ENCODE measurements at regions of chr14 and their contacts with region 1.

Region 1: DNA sequence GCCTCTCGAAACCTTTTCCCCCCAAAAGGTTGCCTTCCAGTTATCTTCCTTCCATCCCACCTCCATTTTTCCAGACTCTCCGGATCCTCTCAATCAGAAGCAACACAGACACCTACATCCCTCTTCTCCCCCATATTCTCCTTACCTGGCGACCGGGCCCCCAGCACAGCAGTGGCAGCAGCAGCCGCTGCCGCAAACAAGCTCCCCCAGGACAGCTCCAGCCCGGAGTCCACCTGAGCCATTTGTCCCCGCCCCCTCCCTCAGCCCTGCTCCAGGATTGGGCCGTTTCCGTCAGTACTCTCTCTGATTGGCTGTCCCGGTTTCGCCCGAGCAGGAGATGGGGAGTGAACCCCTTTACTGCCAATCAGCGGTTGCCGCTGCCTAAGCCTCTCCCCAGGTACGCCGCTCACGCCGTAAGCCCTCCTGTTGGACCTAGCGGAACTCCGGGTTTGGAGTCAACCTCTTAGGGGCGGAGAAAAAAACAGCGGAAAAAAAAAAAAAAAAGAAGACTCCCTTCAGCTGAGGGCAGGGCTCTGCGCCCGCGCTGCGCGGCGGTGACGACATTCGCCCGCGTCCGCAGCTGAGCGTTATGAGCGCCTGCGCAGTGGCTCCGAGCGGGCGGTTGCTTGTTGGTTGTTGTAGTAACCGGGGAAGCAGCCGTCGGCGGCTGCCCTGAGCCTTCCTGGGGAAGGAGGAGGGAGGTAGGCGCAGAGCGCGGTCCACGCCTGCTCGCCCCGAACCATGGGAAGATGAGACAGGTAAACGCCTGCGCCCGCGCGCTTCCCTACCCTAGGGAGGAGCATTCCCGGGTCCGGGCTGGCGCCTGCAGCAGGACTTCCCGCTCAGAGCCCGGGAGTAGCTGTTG is at the starts of genes ERG28 and TTLL5:
- DNase-seq: peak; percentile 94
- ATAC-seq: peak; percentile 92
- H3K4me3 Mint-ChIP-seq: peak within 1 kb of the TSS; percentile 99
- H3K27ac Mint-ChIP-seq: peak within 1 kb of the TSS; percentile 97
- H3K4me1 Mint-ChIP-seq: peaks cover 25% of the 10 kb centered on the region
- H3K27me3 Mint-ChIP-seq: no peaks in the 10 kb centered on the region
- CTCF ChIP-seq: no peak
- total RNA-seq, gene ERG28: 28.4 and 30.7 TPM in 2 replicates
- total RNA-seq, gene TTLL5: 37.9 and 39.1 TPM in 2 replicates

Region 2: GRCh38 chr14:74712499-74713394 is 948.1 kb before region 1 on chr14 and contains the starts of genes AREL1 and FCF1:
- CTCF ChIA-PET with region 1: no interaction called
- POLR2A ChIA-PET with region 1: no interaction called
- intact Hi-C with region 1: loop called (anchors 2 kb)
- DNase-seq: peak; percentile 69
- ATAC-seq: peak; percentile 90
- H3K4me3 Mint-ChIP-seq: peak within 1 kb of the TSS; percentile 95
- H3K27ac Mint-ChIP-seq: peak within 1 kb of the TSS; percentile 92
- H3K4me1 Mint-ChIP-seq: peaks cover 49% of the 10 kb centered on the region
- H3K27me3 Mint-ChIP-seq: no peaks in the 10 kb centered on the region
- CTCF ChIP-seq: no peak
- total RNA-seq, gene AREL1: 46.5 and 49.7 TPM in 2 replicates
- total RNA-seq, gene FCF1: 49.4 and 49.5 TPM in 2 replicates

Region 3: GRCh38 chr14:75002392-75003249 is 658.2 kb before region 1 on chr14 and contains the start of gene EIF2B2:
- CTCF ChIA-PET with region 1: no interaction called
- POLR2A ChIA-PET with region 1: no interaction called
- intact Hi-C with region 1: loop called (anchors 2 kb)
- DNase-seq: peak; percentile 97
- ATAC-seq: peak; percentile 96
- H3K4me3 Mint-ChIP-seq: peak within 1 kb of the TSS; percentile 99
- H3K27ac Mint-ChIP-seq: peak within 1 kb of the TSS; percentile 96
- H3K4me1 Mint-ChIP-seq: peaks cover 25% of the 10 kb centered on the region
- H3K27me3 Mint-ChIP-seq: no peaks in the 10 kb centered on the region
- CTCF ChIP-seq: no peak
- total RNA-seq, gene EIF2B2: 36.6 and 37.2 TPM in 2 replicates

Region 4: GRCh38 chr14:75258615-75259466 is 402.0 kb before region 1 on chr14:
- CTCF ChIA-PET with region 1: no interaction called
- POLR2A ChIA-PET with region 1: no interaction called
- intact Hi-C with region 1: loop called (anchors 1 kb)
- DNase-seq: peak; percentile 99
- ATAC-seq: peak; percentile 86
- H3K4me3 Mint-ChIP-seq: peak overlapping the region; percentile 95
- H3K27ac Mint-ChIP-seq: peak overlapping the region; percentile 100
- H3K4me1 Mint-ChIP-seq: peaks cover 24% of the 10 kb centered on the region
- H3K27me3 Mint-ChIP-seq: peaks cover 4% of the 10 kb centered on the region
- CTCF ChIP-seq: no peak

Region 5: GRCh38 chr14:75542588-75543091 is 118.2 kb before region 1 on chr14:
- CTCF ChIA-PET with region 1: no interaction called
- POLR2A ChIA-PET with region 1: interaction called, 10 read pairs
- intact Hi-C with region 1: loop called (anchors 1 kb)
- DNase-seq: peak; percentile 65
- ATAC-seq: peak; percentile 80
- H3K4me3 Mint-ChIP-seq: peak overlapping the region; percentile 74
- H3K27ac Mint-ChIP-seq: peak overlapping the region; percentile 99
- H3K4me1 Mint-ChIP-seq: peaks cover 78% of the 10 kb centered on the region
- H3K27me3 Mint-ChIP-seq: no peaks in the 10 kb centered on the region
- CTCF ChIP-seq: no peak

Region 6: GRCh38 chr14:75597149-75597548 is 63.7 kb before region 1 on chr14:
- CTCF ChIA-PET with region 1: no interaction called
- POLR2A ChIA-PET with region 1: no interaction called
- intact Hi-C with region 1: no loop called
- DNase-seq: no peak
- ATAC-seq: no peak
- H3K4me3 Mint-ChIP-seq: no peak overlapping the region
- H3K27ac Mint-ChIP-seq: no peak overlapping the region
- H3K4me1 Mint-ChIP-seq: peaks cover 1% of the 10 kb centered on the region
- H3K27me3 Mint-ChIP-seq: no peaks in the 10 kb centered on the region
- CTCF ChIP-seq: no peak

Region 7: DNA sequence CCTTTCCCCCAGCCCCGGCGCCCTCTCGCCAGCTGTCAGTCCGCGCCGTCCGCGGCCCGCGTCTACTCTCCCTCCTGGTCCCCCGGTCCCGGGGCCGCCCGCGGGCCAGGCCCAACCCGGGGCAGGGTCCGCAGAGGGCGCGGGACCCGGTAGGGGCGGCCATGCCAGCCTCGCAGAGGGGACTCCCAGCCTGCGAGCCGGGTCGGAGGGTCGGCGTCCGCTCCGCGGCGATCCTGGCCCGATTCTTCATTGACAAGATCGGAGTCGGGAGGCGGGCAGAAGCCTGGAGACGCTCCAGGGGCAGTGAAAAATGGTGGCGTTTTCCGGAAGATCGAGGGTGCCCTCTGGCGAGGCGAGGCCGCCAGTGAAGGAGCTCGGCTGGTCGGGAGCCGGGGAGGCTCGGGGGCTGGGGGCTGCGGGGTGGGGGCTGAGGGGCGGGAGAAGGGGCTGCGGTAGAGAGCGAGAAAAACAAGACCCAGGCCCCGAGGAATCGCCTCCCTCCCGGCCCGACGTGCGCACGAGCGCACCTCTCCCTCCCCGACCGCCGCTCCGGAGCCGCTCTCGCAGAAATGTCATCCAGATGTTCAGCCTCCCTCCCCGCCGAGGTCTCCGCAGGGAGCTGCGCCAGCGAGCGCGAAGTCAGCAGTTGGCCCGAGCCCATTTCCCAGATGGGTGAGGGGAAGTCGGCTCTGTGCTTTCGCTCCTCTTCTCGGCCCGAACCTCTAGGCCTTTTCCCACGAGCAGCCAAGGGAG is 321.6 kb after region 1 on chr14:
- CTCF ChIA-PET with region 1: interaction called, 3 read pairs
- POLR2A ChIA-PET with region 1: no interaction called
- intact Hi-C with region 1: loop called (anchors 1 kb)
- DNase-seq: peak; percentile 79
- ATAC-seq: peak; percentile 69
- H3K4me3 Mint-ChIP-seq: peak overlapping the region; percentile 87
- H3K27ac Mint-ChIP-seq: peak overlapping the region; percentile 72
- H3K4me1 Mint-ChIP-seq: peaks cover 64% of the 10 kb centered on the region
- H3K27me3 Mint-ChIP-seq: no peaks in the 10 kb centered on the region
- CTCF ChIP-seq: no peak

Measured in activated B cell treated with CpG ODN at 0.5 μM for 24 hours (primary cell).